ENCODE measurements at regions of chr5 and their contacts with region 1.

Region 1: DNA sequence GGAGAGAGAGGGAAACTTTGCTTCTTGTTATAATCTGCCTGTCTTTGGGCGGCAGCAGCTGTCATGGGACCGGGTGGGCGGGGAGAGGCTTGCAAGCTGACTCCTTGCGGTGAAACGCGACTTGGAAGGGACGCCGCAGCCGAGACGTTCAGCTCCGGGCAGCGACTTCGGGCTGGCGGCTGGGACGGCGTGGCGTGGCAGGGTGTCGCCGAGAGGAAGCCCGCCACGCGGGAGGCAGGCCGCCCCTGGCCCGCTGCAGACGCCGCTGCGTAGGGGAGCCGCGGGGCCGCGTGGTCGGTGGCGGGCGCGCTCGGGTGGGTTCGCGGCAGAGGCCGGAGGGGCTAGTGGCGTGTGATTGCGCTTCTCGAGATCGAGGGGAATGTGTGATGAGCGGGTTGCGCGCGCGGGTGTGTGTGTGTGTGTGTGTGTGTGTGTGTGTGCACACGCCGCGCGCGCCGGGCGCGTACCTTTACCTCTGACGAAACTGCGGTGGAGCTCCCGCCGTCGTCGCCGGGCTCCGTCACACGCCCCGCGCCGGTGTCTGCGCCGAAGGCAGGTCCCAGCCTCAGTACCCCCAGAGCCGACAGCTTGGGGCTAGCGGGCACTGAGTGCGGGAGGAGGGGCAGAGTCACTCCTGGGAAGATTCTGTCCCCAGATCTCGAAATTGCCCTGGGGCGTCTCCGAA is 1.7 kb downstream of the PPARGC1B start:
- DNase-seq: peak; percentile 84
- H3K4me3 ChIP-seq: peak overlapping the region; percentile 79 to 96 (median 86)
- H3K27ac ChIP-seq: peak overlapping the region; percentile 48
- H3K4me1 ChIP-seq: peaks cover 35% of the 10 kb centered on the region
- H3K27me3 ChIP-seq: no peaks in the 10 kb centered on the region
- CTCF ChIP-seq: no peak

Region 2: GRCh38 chr5:149094981-149095380 is 636.8 kb before region 1 on chr5:
- CTCF ChIA-PET with region 1: no interaction called
- dilution Hi-C with region 1: no loop called
- in situ Hi-C with region 1: no loop called
- intact Hi-C with region 1: no loop called
- DNase-seq: no peak
- H3K4me3 ChIP-seq: no peak overlapping the region
- H3K27ac ChIP-seq: no peak overlapping the region
- H3K4me1 ChIP-seq: no peaks in the 10 kb centered on the region
- H3K27me3 ChIP-seq: no peaks in the 10 kb centered on the region
- CTCF ChIP-seq: no peak

Region 3: GRCh38 chr5:149680810-149681221 is 51.0 kb before region 1 on chr5:
- CTCF ChIA-PET with region 1: no interaction called
- dilution Hi-C with region 1: no loop called
- in situ Hi-C with region 1: no loop called
- intact Hi-C with region 1: no loop called
- DNase-seq: no peak
- H3K4me3 ChIP-seq: no peak overlapping the region
- H3K27ac ChIP-seq: no peak overlapping the region
- H3K4me1 ChIP-seq: no peaks in the 10 kb centered on the region
- H3K27me3 ChIP-seq: no peaks in the 10 kb centered on the region
- CTCF ChIP-seq: no peak

Region 4: DNA sequence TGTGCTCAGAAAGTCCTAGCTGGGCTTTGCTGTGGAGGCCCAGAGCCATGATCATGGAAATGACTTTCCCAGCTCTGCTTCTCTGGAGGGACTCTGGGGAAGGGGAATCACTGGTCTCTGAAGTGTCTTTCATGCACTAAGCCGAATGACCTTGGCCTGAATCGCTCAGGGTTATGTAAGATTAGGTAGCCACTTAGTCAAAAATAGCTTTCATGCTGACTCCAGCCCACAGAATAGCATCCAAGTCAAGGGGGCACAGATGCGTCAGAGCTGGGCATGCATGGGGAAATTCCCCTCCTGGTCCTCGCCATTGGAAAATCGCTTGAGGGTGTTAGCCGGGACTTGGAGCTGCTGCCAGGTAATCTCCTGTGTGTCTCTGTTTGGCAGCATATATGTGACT is 37.8 kb before region 1 on chr5:
- CTCF ChIA-PET with region 1: no interaction called
- dilution Hi-C with region 1: no loop called
- in situ Hi-C with region 1: no loop called
- intact Hi-C with region 1: no loop called
- DNase-seq: peak; percentile 62
- H3K4me3 ChIP-seq: no peak overlapping the region
- H3K27ac ChIP-seq: no peak overlapping the region
- H3K4me1 ChIP-seq: peaks cover 6% of the 10 kb centered on the region
- H3K27me3 ChIP-seq: peaks cover 4% of the 10 kb centered on the region
- CTCF ChIP-seq: no peak

Region 5: DNA sequence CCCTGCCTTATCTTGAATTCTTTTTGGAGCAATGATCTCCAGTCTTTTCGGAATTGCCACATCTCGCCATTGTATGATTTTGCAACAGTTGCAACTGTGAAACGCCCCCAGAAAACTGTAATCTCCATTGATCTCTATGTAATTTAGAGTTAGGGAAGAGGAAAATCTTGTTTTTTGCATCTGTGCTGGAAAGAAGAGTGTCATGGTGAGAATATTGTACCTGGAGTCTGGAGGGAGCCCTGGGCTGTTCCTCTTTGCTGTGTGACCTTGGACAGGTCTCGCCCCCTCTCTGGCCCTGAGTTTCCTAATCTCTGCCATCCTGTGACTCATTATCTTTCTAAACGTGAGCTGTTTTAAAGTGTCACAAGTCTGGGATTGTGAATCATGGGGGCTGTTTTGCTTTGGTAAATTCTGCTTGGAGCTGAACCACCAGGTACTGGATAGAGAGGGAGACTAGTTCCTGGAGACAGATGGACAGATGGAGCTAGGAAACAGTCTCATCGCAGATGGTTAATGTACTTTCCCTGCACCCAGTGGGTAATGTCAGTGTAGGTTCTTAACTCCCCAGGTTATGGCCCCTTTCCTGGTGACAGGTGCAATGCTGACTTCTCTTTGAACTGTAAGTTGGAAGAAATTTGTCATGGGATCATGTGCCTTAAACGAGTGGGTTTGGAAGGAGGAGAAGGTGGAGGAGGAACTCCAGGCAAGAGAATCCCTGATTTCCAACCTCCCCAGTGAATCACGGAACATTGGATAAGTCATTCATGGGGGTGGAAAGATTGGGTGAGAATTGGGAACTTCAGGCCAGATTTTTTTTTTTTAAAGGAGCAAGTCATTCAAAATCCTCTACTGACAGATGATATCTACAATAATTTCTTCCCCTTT is 17.9 kb after region 1 on chr5:
- CTCF ChIA-PET with region 1: interaction called, 3 read pairs
- dilution Hi-C with region 1: no loop called
- in situ Hi-C with region 1: no loop called
- intact Hi-C with region 1: loop called (anchors 2 kb)
- DNase-seq: peak; percentile 48
- H3K4me3 ChIP-seq: no peak overlapping the region
- H3K27ac ChIP-seq: no peak overlapping the region
- H3K4me1 ChIP-seq: peaks cover 25% of the 10 kb centered on the region
- H3K27me3 ChIP-seq: no peaks in the 10 kb centered on the region
- CTCF ChIP-seq: no peak

Region 6: DNA sequence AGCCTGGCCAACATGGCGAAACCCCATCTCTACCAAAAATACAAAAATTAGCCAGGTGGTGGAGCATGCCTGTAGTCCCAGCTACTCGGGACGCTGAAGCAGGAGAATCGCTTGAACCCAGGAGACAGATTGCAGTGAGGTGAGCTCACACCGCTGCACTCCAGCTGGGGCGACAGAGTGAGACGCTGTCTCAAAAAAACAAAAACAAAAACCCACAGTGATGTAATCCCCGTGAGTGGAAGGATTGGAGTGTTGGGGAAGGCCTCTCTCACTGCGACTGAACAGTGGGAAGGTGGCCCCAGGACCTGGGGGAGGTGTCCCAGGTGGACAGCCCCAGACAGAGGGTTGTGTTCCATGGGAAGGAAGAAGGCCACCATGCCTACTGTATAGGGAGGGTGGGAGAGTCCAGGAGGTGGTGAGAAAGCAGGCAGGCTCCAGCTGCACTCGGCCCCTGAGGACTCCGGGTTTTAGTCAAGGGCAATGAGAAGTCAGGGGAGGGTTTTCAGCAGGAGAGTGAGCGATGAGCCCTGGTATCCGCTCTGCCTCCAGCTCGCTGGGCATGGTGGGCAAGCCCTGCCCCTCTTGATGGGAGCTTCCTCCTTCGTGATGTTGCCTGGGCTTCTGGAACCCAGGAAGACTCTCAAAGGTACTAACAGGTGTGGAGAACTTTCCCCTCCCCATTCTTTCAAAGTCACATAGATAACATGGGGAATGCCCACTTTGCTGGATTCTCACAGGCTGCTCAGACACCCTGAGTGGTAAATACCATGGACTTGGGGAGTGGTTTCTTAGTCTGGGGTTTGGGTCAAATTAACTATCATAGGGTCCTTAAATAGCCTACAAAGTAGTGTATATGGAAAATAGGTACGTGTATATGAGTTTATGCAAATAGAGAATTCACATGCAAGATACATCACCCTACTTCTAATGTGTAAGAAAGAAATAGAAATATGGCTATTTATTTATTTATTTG is 73.0 kb after region 1 on chr5:
- CTCF ChIA-PET with region 1: no interaction called
- dilution Hi-C with region 1: no loop called
- in situ Hi-C with region 1: no loop called
- intact Hi-C with region 1: loop called (anchors 5 kb)
- DNase-seq: no peak
- H3K4me3 ChIP-seq: no peak overlapping the region
- H3K27ac ChIP-seq: no peak overlapping the region
- H3K4me1 ChIP-seq: peaks cover 15% of the 10 kb centered on the region
- H3K27me3 ChIP-seq: no peaks in the 10 kb centered on the region
- CTCF ChIP-seq: no peak

Measured in mammary epithelial cell (primary cell).